ENCODE measurements at regions of chr18 and their contacts with region 1.

Region 1: DNA sequence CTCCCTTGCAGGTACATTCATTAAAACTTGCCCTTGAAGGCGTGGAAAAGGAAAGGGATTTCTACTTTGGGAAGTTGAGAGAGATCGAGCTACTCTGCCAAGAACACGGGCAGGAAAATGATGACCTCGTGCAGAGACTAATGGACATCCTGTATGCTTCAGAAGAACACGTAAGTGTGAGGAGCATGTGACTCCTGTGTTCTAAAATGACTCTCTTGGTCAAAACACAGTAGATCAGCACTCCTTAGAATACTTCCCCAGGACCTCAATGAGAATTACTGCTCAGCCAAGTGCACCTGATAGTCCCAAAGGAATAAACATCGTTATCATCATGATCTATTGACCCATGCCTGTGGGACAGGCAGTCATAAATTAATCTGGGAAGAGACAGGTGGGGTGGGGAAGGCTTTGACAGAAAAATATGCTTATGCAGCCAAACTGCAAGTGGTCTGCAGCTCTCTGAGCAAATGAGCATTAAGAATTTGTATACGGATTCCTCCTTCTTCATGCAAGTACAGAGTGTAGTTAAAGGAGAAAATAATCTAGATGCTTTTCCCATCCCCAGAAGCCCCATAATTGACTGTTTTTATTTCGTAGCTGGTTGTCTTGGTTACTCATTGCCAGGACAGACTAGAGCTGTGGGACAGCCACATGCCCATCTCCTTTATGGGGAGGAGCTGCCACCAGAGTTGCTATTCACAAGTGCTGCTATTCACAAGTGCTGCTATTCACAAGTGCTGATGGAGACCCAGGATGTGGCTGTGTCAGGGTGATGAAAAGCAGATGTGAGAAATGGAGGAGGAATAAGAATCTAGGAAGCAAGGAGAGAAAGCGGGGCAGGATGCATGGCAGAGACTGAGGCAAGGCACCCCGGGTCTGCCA is 91.0 kb downstream of the MAPRE2 start:
- DNase-seq: no peak
- ATAC-seq: peak; percentile 39 to 75 (median 57)
- H3K4me3 ChIP-seq: no peak overlapping the region
- H3K27ac ChIP-seq: peak overlapping the region in 11 of 12 donors; percentile 8 to 77 (median 51)
- H3K4me1 ChIP-seq: peaks cover 0 to 66% (median 26%) of the 10 kb centered on the region in 12 donors
- H3K27me3 ChIP-seq: no peaks in the 10 kb centered on the region
- CTCF ChIP-seq: no peak
- POLR2A ChIP-seq: no peak

Region 2: GRCh38 chr18:34840256-34840815 is 291.9 kb before region 1 on chr18:
- intact Hi-C with region 1: no loop called
- DNase-seq: no peak
- ATAC-seq: no peak
- H3K4me3 ChIP-seq: no peak overlapping the region
- H3K27ac ChIP-seq: no peak overlapping the region
- H3K4me1 ChIP-seq: peaks cover 0 to 32% (median 8%) of the 10 kb centered on the region in 12 donors
- H3K27me3 ChIP-seq: no peaks in the 10 kb centered on the region
- CTCF ChIP-seq: no peak
- POLR2A ChIP-seq: no peak

Region 3: GRCh38 chr18:35029770-35030169 is 102.5 kb before region 1 on chr18:
- intact Hi-C with region 1: loop called in 3 of 10 experiments (anchors 5 to 10 kb)
- DNase-seq: no peak
- ATAC-seq: peak in 1 of 4 donors; percentile 56
- H3K4me3 ChIP-seq: peak overlapping the region in 10 of 12 donors; percentile 11 to 50 (median 34)
- H3K27ac ChIP-seq: peak overlapping the region in 10 of 12 donors; percentile 19 to 86 (median 32)
- H3K4me1 ChIP-seq: peaks cover 0 to 38% (median 30%) of the 10 kb centered on the region in 12 donors
- H3K27me3 ChIP-seq: no peaks in the 10 kb centered on the region
- CTCF ChIP-seq: peak in 2 of 12 donors; percentile 7 to 10
- POLR2A ChIP-seq: no peak

Region 4: DNA sequence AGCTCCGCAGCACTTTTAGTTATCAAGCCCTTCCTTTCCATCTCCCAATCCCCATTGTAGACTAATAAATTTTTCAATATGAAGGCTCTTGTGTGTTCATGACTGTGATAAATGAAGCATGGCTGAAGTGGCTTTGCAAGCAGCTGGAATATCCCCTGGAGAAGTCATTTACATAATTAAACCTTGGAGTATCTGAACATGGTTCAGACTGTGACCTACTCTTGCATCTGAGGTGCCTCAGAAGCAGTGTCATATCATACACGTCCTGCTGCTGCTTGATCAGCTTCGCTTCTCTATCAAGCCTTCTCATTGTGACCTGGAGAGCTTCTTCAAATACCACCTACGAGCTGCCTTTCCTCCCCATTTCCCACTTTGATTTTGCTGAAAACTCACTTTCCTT is 60.2 kb after region 1 on chr18:
- intact Hi-C with region 1: loop called in 1 of 10 experiments (anchors 10 kb)
- DNase-seq: no peak
- ATAC-seq: no peak
- H3K4me3 ChIP-seq: no peak overlapping the region
- H3K27ac ChIP-seq: no peak overlapping the region
- H3K4me1 ChIP-seq: no peaks in the 10 kb centered on the region
- H3K27me3 ChIP-seq: no peaks in the 10 kb centered on the region
- CTCF ChIP-seq: no peak
- POLR2A ChIP-seq: no peak

Region 5: GRCh38 chr18:35253655-35254287 is 121.5 kb after region 1 on chr18:
- intact Hi-C with region 1: no loop called
- DNase-seq: no peak
- ATAC-seq: no peak
- H3K4me3 ChIP-seq: no peak overlapping the region
- H3K27ac ChIP-seq: no peak overlapping the region
- H3K4me1 ChIP-seq: no peaks in the 10 kb centered on the region
- H3K27me3 ChIP-seq: no peaks in the 10 kb centered on the region
- CTCF ChIP-seq: no peak
- POLR2A ChIP-seq: no peak

Measured in heart left ventricle (tissue), 16 donors.